ENCODE measurements at regions of chr14 and their contacts with region 1.

Region 1: GRCh38 chr14:99982537-99983250 is 82.5 kb upstream of the EVL start:
- DNase-seq: peak; percentile 30 to 40
- ATAC-seq: peak; percentile 77

Region 2: GRCh38 chr14:100108042-100108825 is 125.5 kb after region 1 on chr14:
- intact Hi-C with region 1: loop called (anchors 5 to 10 kb)
- DNase-seq: peak; percentile 69 to 90
- ATAC-seq: peak; percentile 85

Region 3: GRCh38 chr14:100173353-100173752 is 190.7 kb after region 1 on chr14:
- intact Hi-C with region 1: no loop called
- DNase-seq: no peak
- ATAC-seq: no peak

Region 4: DNA sequence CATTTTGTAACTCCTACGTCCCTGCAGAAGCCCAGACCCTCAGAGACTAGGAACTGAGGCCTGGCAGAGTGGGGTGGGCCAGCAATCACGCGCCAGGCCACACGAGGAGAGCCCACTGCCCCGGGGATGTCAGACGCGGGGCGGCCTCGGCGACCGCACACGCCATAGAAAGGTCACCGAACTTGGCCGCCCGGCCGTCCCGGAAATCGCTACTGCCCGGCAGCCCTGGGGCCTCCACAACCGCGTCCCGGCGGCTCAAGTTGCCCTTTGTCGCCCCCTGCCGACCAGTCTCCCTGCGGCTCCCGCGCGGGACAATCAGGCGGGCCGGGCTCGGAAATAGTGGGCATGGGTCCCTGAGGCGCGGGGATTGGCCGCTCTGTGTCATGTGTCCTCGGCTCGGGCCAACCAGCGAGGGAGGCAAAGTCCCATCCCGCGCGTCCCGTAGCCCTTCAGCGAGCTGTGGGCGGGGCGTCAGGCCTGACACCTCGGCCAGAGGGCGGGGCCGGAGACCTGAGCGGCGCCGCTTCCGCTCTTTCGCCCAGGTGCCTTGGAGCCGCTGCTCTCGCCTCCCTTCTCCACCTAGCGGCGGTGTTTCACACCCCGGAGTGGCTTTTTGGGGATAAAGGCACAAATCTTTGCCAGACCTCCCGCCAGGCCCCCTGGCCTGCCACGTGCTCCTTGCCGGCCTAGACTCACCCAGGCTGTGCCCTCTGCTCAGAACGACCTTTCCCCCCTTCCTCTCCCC is 210.2 kb after region 1 on chr14:
- intact Hi-C with region 1: loop called in 1 of 2 experiments (anchors 5 kb)
- DNase-seq: peak; percentile 99
- ATAC-seq: peak; percentile 98